K562 (cell line): ENCODE measurements at regions of chr10 and their contacts with region 1.

Region 1: GRCh38 chr10:125817337-125817946 is 5.6 kb downstream of the UROS start:
- DNase-seq: peak in 2 of 4 experiments; percentile 21 to 40
- ATAC-seq: peak; percentile 22
- H3K4me3 ChIP-seq: no peak overlapping the region
- H3K27ac ChIP-seq: peak overlapping the region; percentile 89
- H3K4me1 ChIP-seq: peaks cover 5 to 50% of the 10 kb centered on the region in 2 experiments; a peak in 4 of 5 replicates
- H3K27me3 ChIP-seq: no peaks in the 10 kb centered on the region
- CTCF ChIP-seq: no peak
- EP300 ChIP-seq: no peak
- POLR2A ChIP-seq: no peak
- RAD21 ChIP-seq: no peak

Region 2: GRCh38 chr10:125719146-125720001 is 98.1 kb before region 1 on chr10 and contains the start of gene EDRF1:
- CTCF ChIA-PET with region 1: no interaction called
- POLR2A ChIA-PET with region 1: no interaction called
- in situ Hi-C with region 1: no loop called
- intact Hi-C with region 1: loop called (anchors 5 kb)
- DNase-seq: peak; percentile 92 to 97 (median 94)
- ATAC-seq: peak; percentile 99
- H3K4me3 ChIP-seq: peak within 1 kb of the TSS; percentile 99
- H3K27ac ChIP-seq: peak within 1 kb of the TSS; percentile 78
- H3K4me1 ChIP-seq: peaks cover 5 to 6% of the 10 kb centered on the region in 2 experiments; a peak in 4 of 5 replicates
- H3K27me3 ChIP-seq: no peaks in the 10 kb centered on the region
- CTCF ChIP-seq: no peak
- EP300 ChIP-seq: no peak
- POLR2A ChIP-seq: peak; percentile 89
- RAD21 ChIP-seq: no peak
- polyA plus RNA-seq, gene EDRF1: 7.6 to 9.9 TPM

Region 3: GRCh38 chr10:126041781-126042231 is 224.4 kb after region 1 on chr10:
- CTCF ChIA-PET with region 1: no interaction called
- POLR2A ChIA-PET with region 1: no interaction called
- in situ Hi-C with region 1: no loop called
- intact Hi-C with region 1: no loop called
- DNase-seq: no peak
- ATAC-seq: no peak; the same call in 2 of the 3 replicates
- H3K4me3 ChIP-seq: no peak overlapping the region
- H3K27ac ChIP-seq: no peak overlapping the region
- H3K4me1 ChIP-seq: no peaks in the 10 kb centered on the region
- H3K27me3 ChIP-seq: peaks cover 3 to 33% of the 10 kb centered on the region in 2 experiments; a peak in 2 of 5 replicates
- CTCF ChIP-seq: no peak
- EP300 ChIP-seq: no peak
- POLR2A ChIP-seq: no peak
- RAD21 ChIP-seq: no peak